CD4-positive, alpha-beta T cell (primary cell): ENCODE measurements at regions of chr17 and their contacts with region 1.

Region 1: GRCh38 chr17:55527540-55528118 is 16.4 kb upstream of the SMIM36 start:
- DNase-seq: peak in 3 of 14 experiments; percentile 8 to 15 (median 15)
- ATAC-seq: no peak
- H3K4me3 ChIP-seq: no peak overlapping the region
- H3K4me3 Mint-ChIP-seq: no peak overlapping the region
- H3K27ac ChIP-seq: no peak overlapping the region
- H3K27ac Mint-ChIP-seq: no peak overlapping the region
- H3K4me1 ChIP-seq: no peaks in the 10 kb centered on the region
- H3K4me1 Mint-ChIP-seq: no peaks in the 10 kb centered on the region
- H3K27me3 ChIP-seq: no peaks in the 10 kb centered on the region
- H3K27me3 Mint-ChIP-seq: peaks cover 5% of the 10 kb centered on the region
- CTCF ChIP-seq: no peak

Region 2: DNA sequence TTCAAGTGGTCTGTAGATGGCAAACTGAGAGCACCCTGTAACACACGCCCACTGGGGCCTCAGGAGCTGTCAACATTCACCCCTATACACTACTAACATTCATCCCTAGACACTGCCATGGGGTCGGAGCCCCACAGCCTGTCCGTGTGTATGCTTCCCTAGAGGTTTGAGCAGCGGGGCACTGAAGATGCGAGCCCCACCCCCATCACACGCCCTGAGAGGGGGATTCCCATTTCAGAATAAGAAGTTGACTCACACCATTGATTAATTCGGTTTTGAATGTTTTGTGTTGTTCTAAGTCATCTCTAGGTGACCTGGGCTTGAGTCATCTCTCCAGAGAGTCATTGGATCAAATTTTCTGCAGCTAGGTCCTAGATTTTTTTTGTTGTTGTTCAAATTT is 68.7 kb before region 1 on chr17:
- CTCF ChIA-PET with region 1: no interaction called
- POLR2A ChIA-PET with region 1: no interaction called
- intact Hi-C with region 1: no loop called
- DNase-seq: peak in 2 of 14 experiments; percentile 9 to 22
- ATAC-seq: no peak
- H3K4me3 ChIP-seq: no peak overlapping the region
- H3K4me3 Mint-ChIP-seq: no peak overlapping the region
- H3K27ac ChIP-seq: no peak overlapping the region
- H3K27ac Mint-ChIP-seq: no peak overlapping the region
- H3K4me1 ChIP-seq: peaks cover 4% of the 10 kb centered on the region
- H3K4me1 Mint-ChIP-seq: no peaks in the 10 kb centered on the region
- H3K27me3 ChIP-seq: peaks cover 0 to 3% of the 10 kb centered on the region in 2 experiments
- H3K27me3 Mint-ChIP-seq: peaks cover under 1% of the 10 kb centered on the region
- CTCF ChIP-seq: no peak

Region 3: DNA sequence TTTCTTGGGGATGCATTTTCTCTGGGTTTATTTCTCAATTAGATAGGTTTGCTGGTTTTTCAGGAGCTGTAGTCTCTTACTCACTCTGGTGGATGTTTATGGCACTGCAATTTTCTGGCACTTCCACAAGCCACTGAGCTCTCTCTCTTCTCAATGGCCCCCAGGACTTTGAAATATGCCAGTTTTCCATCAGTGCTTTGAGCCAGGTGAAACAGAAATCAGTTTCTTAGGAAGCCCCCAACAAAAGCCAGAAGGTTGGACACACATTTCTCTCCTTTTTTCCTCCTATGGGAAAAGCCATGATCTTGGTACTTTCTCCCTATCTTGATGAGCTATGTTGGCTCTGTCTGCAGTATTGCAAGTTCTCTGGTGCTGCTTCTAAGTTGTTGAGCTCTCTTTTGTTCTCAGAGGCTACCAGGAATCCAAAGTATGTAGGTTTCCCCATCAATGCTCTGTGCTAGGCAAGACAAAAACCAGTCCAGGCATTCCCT is 74.3 kb after region 1 on chr17:
- CTCF ChIA-PET with region 1: interaction called, 33 read pairs
- POLR2A ChIA-PET with region 1: no interaction called
- intact Hi-C with region 1: loop called (anchors 1 to 2 kb)
- DNase-seq: peak in 5 of 14 experiments; percentile 5 to 65 (median 54)
- ATAC-seq: peak; percentile 37
- H3K4me3 ChIP-seq: no peak overlapping the region
- H3K4me3 Mint-ChIP-seq: no peak overlapping the region
- H3K27ac ChIP-seq: no peak overlapping the region
- H3K27ac Mint-ChIP-seq: no peak overlapping the region
- H3K4me1 ChIP-seq: no peaks in the 10 kb centered on the region
- H3K4me1 Mint-ChIP-seq: no peaks in the 10 kb centered on the region
- H3K27me3 ChIP-seq: peaks cover 0 to 6% of the 10 kb centered on the region in 2 experiments
- H3K27me3 Mint-ChIP-seq: peaks cover 33% of the 10 kb centered on the region
- CTCF ChIP-seq: peak; percentile 18

Region 4: DNA sequence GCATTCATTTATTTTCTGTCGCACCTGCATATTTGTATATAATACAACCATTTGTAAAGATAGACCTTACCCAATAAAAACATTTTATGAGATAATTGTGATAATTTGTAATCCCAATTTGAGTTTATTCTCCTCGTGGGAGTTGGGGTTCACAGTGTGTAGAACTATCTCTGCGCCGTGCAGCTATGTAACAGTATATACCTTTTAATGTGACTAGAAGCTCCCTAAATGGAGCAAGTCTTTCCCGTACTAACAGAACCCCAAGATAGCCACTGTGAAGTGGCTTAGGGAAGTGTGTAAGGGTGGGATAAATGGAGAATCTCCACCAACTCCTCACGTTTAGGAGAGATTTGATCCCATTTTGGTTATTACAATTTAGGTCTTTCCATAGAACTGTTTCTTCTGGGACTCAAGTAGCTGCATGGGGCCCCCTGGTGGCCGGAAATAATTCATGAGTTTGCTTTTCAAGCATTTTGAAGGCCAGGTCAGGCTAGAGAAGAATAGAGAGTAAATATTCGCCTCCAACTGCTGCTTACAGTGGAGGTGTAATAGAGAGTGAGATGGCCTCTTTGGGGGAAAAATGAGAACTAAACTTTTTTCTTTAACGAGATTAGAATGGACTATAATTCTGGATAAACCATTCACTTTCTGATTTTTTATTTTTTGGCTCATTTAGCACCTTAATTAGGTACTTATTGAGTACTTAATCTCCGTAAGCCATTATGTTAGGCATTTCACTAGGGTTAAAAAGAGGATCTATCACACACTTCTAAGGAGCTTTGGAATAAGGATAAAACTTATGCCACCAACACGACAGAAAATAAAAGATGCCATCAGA is 190.5 kb after region 1 on chr17:
- CTCF ChIA-PET with region 1: interaction called, 16 read pairs
- POLR2A ChIA-PET with region 1: no interaction called
- intact Hi-C with region 1: loop called (anchors 1 kb)
- DNase-seq: peak; percentile 27 to 72 (median 48)
- ATAC-seq: no peak
- H3K4me3 ChIP-seq: no peak overlapping the region
- H3K4me3 Mint-ChIP-seq: no peak overlapping the region
- H3K27ac ChIP-seq: no peak overlapping the region
- H3K27ac Mint-ChIP-seq: no peak overlapping the region
- H3K4me1 ChIP-seq: no peaks in the 10 kb centered on the region
- H3K4me1 Mint-ChIP-seq: no peaks in the 10 kb centered on the region
- H3K27me3 ChIP-seq: peaks cover 6 to 7% of the 10 kb centered on the region in 2 experiments
- H3K27me3 Mint-ChIP-seq: peaks cover 29% of the 10 kb centered on the region
- CTCF ChIP-seq: peak; percentile 90

Region 5: GRCh38 chr17:55825213-55825612 is 297.6 kb after region 1 on chr17:
- CTCF ChIA-PET with region 1: no interaction called
- POLR2A ChIA-PET with region 1: no interaction called
- intact Hi-C with region 1: loop called in 1 of 2 experiments (anchors 10 kb)
- DNase-seq: no peak
- ATAC-seq: no peak
- H3K4me3 ChIP-seq: no peak overlapping the region
- H3K4me3 Mint-ChIP-seq: no peak overlapping the region
- H3K27ac ChIP-seq: no peak overlapping the region
- H3K27ac Mint-ChIP-seq: no peak overlapping the region
- H3K4me1 ChIP-seq: no peaks in the 10 kb centered on the region
- H3K4me1 Mint-ChIP-seq: no peaks in the 10 kb centered on the region
- H3K27me3 ChIP-seq: no peaks in the 10 kb centered on the region
- H3K27me3 Mint-ChIP-seq: no peaks in the 10 kb centered on the region
- CTCF ChIP-seq: no peak

Region 6: GRCh38 chr17:56715613-56716357 is 1188.2 kb after region 1 on chr17:
- CTCF ChIA-PET with region 1: interaction called, 4 read pairs
- POLR2A ChIA-PET with region 1: no interaction called
- intact Hi-C with region 1: loop called (anchors 1 to 2 kb)
- DNase-seq: peak; percentile 60 to 87 (median 66)
- ATAC-seq: peak; percentile 93
- H3K4me3 ChIP-seq: no peak overlapping the region
- H3K4me3 Mint-ChIP-seq: no peak overlapping the region
- H3K27ac ChIP-seq: no peak overlapping the region
- H3K27ac Mint-ChIP-seq: no peak overlapping the region
- H3K4me1 ChIP-seq: peaks cover 8% of the 10 kb centered on the region
- H3K4me1 Mint-ChIP-seq: peaks cover 8% of the 10 kb centered on the region
- H3K27me3 ChIP-seq: no peaks in the 10 kb centered on the region
- H3K27me3 Mint-ChIP-seq: no peaks in the 10 kb centered on the region
- CTCF ChIP-seq: peak; percentile 80